ENCODE measurements at regions of chr7 and their contacts with region 1.

Region 1: GRCh38 chr7:135662373-135663114 is at the start of gene STMP1:
- DNase-seq: peak; percentile 89
- H3K4me3 ChIP-seq: peak within 1 kb of the TSS; percentile 97 to 99 (median 98)
- H3K27ac ChIP-seq: peak within 1 kb of the TSS; percentile 77
- H3K4me1 ChIP-seq: peaks cover 22% of the 10 kb centered on the region
- H3K27me3 ChIP-seq: no peaks in the 10 kb centered on the region
- CTCF ChIP-seq: peak in 1 of 2 donors; percentile 31
- total RNA-seq, gene STMP1: 19.5 to 39.3 TPM

Region 2: DNA sequence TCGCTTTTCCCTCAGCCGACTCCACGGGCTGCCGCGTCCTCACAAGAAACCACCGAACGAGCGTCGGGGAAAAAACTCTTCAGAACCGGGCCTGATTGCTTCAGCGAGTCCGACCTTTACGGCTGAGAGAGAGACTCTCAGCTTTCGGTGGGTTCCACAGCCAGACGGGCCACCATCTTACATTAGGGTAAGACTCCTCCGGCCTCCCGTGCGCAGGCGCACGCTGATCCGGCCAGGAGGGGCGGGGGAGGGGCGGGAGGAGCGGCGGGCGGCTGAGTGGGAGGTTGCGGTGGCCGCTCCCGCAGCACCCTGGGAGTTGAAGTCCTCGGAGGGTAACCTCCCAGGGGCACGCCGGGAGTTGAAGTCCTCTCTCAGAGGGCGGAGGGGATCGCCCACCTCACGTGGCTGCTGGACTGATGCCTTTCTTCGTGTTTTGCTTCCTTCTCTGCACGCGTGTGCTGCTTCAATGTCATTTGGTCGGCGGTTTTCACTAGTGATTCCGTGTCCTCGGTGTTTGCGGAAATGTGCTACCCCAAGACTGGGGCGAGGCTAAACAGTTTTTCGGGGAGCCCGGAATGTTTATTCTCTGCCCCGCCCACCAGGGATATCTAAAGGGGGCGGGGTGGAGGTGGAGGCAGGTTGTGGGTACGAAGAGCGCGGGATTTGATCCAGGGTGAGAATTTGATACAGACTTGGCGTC is 152.5 kb before region 1 on chr7 and contains the start of gene CNOT4:
- CTCF ChIA-PET with region 1: no interaction called
- dilution Hi-C with region 1: no loop called
- in situ Hi-C with region 1: no loop called
- intact Hi-C with region 1: loop called (anchors 5 kb)
- DNase-seq: peak; percentile 96
- H3K4me3 ChIP-seq: peak within 1 kb of the TSS; percentile 73 to 91 (median 86)
- H3K27ac ChIP-seq: peak within 1 kb of the TSS; percentile 95
- H3K4me1 ChIP-seq: peaks cover 7% of the 10 kb centered on the region
- H3K27me3 ChIP-seq: no peaks in the 10 kb centered on the region
- CTCF ChIP-seq: no peak
- total RNA-seq, gene CNOT4: 12.7 to 23.1 TPM

Region 3: GRCh38 chr7:135708036-135708435 is 45.5 kb after region 1 on chr7:
- CTCF ChIA-PET with region 1: no interaction called
- dilution Hi-C with region 1: no loop called
- in situ Hi-C with region 1: no loop called
- intact Hi-C with region 1: loop called (anchors 2 kb)
- DNase-seq: no peak
- H3K4me3 ChIP-seq: no peak overlapping the region
- H3K27ac ChIP-seq: no peak overlapping the region
- H3K4me1 ChIP-seq: peaks cover 27% of the 10 kb centered on the region
- H3K27me3 ChIP-seq: no peaks in the 10 kb centered on the region
- CTCF ChIP-seq: no peak

Region 4: GRCh38 chr7:135929249-135929648 is 266.7 kb after region 1 on chr7:
- CTCF ChIA-PET with region 1: no interaction called
- dilution Hi-C with region 1: no loop called
- in situ Hi-C with region 1: no loop called
- intact Hi-C with region 1: loop called (anchors 10 kb)
- DNase-seq: no peak
- H3K4me3 ChIP-seq: no peak overlapping the region
- H3K27ac ChIP-seq: no peak overlapping the region
- H3K4me1 ChIP-seq: peaks cover 14% of the 10 kb centered on the region
- H3K27me3 ChIP-seq: no peaks in the 10 kb centered on the region
- CTCF ChIP-seq: no peak

Region 5: DNA sequence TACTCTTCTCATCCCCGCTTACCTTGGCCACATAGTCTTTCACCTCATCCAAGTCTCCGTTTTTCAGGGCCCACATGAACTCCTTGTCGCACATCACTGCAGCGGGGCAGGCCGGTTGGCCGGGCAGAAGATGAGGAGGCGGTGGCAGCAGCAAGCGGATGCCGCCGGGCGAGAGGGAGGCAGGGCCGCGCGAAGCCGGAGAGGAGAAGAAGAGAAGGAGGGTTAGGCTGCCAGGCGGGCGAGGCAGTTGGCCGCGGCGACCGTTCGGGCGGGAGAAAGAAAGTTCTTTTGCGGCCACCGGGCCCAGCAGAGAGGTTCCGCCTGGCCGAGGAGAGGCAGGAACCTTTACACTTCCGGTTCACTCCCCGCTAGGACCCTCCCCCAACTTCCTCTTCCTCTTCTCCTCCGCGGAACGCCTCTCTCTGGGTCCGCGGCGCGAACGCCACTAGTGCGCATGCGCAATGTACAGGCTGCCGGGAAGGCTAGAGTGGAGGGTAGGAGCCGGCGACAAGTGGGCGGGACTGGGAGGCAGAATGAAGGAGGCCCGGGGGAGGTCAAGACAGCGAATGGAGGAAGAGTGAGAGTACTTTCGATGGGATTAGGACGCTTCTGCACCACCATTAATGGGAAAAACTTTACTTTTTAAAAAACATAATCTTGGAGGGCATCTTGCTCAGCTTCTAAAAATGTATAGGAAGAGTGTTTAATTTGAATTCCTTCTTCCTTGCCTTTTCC is 314.6 kb after region 1 on chr7 and contains the start of gene MTPN:
- CTCF ChIA-PET with region 1: no interaction called
- dilution Hi-C with region 1: no loop called
- in situ Hi-C with region 1: no loop called
- intact Hi-C with region 1: loop called (anchors 2 kb)
- DNase-seq: peak; percentile 96
- H3K4me3 ChIP-seq: peak within 1 kb of the TSS; percentile 80 to 93 (median 88)
- H3K27ac ChIP-seq: peak within 1 kb of the TSS; percentile 57
- H3K4me1 ChIP-seq: peaks cover 27% of the 10 kb centered on the region
- H3K27me3 ChIP-seq: no peaks in the 10 kb centered on the region
- CTCF ChIP-seq: no peak
- total RNA-seq, gene MTPN: 151 to 173 TPM

Region 6: DNA sequence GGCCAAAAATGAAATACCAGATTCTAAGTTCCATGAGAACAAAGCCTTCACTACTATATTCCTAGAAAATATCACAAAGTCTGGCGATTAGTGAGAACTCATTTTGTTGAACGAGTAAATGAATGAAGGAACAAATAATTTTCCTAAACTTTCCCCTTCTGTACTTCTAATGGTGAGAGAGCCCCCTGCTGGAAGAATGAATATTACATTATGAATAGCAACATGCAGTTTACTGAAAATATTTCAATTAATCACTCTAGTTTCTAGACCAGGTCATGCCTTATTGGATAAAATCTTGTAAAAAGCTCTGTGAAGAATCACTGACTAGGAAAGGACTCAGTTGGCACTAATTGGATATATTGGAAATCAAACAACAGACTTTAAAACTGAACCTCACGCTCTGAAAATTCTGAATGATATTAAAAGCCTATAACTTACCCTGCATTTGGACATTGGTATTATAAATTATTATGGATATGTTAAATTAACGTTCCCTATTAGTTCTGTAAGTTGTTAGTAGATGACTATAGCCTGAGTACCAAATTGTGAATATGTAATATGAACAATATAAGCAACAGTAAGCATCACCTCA is 347.0 kb after region 1 on chr7:
- CTCF ChIA-PET with region 1: no interaction called
- dilution Hi-C with region 1: no loop called
- in situ Hi-C with region 1: no loop called
- intact Hi-C with region 1: loop called (anchors 5 kb)
- DNase-seq: peak; percentile 17
- H3K4me3 ChIP-seq: no peak overlapping the region
- H3K27ac ChIP-seq: no peak overlapping the region
- H3K4me1 ChIP-seq: no peaks in the 10 kb centered on the region
- H3K27me3 ChIP-seq: no peaks in the 10 kb centered on the region
- CTCF ChIP-seq: peak; percentile 56 to 58